ENCODE measurements at regions of chr5 and their contacts with region 1.

Region 1: DNA sequence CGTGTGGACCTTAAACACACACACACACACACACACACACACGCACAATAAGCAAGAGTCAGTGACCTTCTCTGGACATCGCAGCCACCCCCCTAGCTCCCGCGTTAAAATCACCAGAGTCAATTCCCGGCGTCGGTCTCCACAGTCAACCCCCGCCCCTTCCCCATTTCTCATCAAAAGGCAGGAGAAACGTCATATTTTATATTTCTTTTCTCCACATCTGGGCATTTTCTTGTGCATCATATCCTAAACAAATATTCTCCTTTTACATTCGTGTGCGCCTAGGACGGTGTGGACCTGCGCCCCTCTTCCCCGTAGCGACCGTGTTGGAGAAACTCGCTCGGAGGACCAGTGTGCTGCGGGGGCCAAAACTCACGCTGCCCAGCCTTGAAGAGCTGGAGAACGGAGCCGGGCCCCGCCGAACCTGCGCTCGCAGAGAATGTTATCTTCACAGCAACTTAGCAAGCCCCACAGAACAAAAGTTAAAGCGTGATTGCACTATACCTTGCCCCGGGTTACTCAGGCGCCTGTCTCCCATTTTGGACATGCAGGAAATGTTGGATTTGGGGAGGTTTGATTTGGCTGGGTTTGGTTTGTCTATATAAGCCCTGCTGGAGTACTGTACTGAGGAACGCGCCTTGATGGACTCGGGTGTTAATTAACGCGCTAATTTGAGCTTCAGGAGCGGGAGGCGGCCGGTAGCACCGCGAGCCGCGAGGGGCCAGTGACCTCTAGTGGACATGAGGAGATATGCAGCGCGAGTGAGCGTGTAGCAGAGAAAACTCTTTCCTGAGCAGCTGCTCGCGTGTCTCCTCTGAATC is 192.4 kb downstream of the MEF2C start:
- DNase-seq: peak; percentile 35 to 69
- H3K4me3 ChIP-seq: peak overlapping the region in 1 of 3 donors; percentile 59
- H3K27ac ChIP-seq: no peak overlapping the region
- H3K4me1 ChIP-seq: peaks cover 0 to 7% of the 10 kb centered on the region in 2 donors
- H3K27me3 ChIP-seq: peaks cover 12 to 100% of the 10 kb centered on the region in 2 donors
- CTCF ChIP-seq: peak; percentile 57 to 89 (median 86)
- POLR2A ChIP-seq: no peak

Region 2: GRCh38 chr5:88140856-88141752 is 549.5 kb before region 1 on chr5:
- intact Hi-C with region 1: loop called (anchors 10 kb)
- DNase-seq: peak; percentile 97
- H3K4me3 ChIP-seq: peak overlapping the region; percentile 50 to 62 (median 59)
- H3K27ac ChIP-seq: peak overlapping the region; percentile 52 to 56
- H3K4me1 ChIP-seq: no peaks in the 10 kb centered on the region
- H3K27me3 ChIP-seq: peaks cover 0 to 7% of the 10 kb centered on the region in 2 donors
- CTCF ChIP-seq: peak in 2 of 3 donors; percentile 30 to 34
- POLR2A ChIP-seq: no peak

Region 3: DNA sequence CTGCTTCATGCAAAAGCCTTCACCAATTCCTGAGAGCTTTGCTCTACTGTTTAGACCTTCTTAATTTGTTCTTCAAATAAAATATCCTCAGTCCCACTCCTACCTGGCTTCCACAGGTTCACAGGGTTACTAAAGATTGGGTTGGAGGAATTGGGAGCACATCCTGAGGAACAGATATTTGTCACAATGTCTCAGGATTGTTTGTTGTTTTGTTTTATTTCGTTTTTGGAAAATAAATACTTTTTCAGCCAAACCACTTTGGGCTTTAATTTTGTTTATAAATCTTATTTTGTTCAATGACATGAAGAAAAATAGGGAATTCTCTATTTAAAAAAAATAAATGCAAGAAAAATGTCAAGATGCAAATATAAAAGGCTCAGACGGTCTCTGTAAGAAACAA is 56.6 kb before region 1 on chr5:
- intact Hi-C with region 1: no loop called
- DNase-seq: no peak
- H3K4me3 ChIP-seq: no peak overlapping the region
- H3K27ac ChIP-seq: no peak overlapping the region
- H3K4me1 ChIP-seq: no peaks in the 10 kb centered on the region
- H3K27me3 ChIP-seq: peaks cover 0 to 4% of the 10 kb centered on the region in 2 donors
- CTCF ChIP-seq: no peak
- POLR2A ChIP-seq: no peak